ENCODE measurements at regions of chr15 and their contacts with region 1.

Region 1: GRCh38 chr15:68304589-68305337 is 27.2 kb downstream of the FEM1B start:
- DNase-seq: no peak
- H3K4me3 ChIP-seq: no peak overlapping the region
- H3K27ac ChIP-seq: peak overlapping the region in 1 of 2 experiments; percentile 61; a peak in 2 of 4 replicates
- H3K4me1 ChIP-seq: no peaks in the 10 kb centered on the region; a peak in 1 of 4 replicates
- H3K27me3 ChIP-seq: no peaks in the 10 kb centered on the region
- CTCF ChIP-seq: no peak
- EP300 ChIP-seq: no peak
- RAD21 ChIP-seq: no peak

Region 2: GRCh38 chr15:68097029-68097428 is 207.7 kb before region 1 on chr15:
- CTCF ChIA-PET with region 1: no interaction called
- POLR2A ChIA-PET with region 1: no interaction called
- DNase-seq: no peak
- H3K4me3 ChIP-seq: no peak overlapping the region
- H3K27ac ChIP-seq: no peak overlapping the region
- H3K4me1 ChIP-seq: no peaks in the 10 kb centered on the region
- H3K27me3 ChIP-seq: no peaks in the 10 kb centered on the region
- CTCF ChIP-seq: no peak
- EP300 ChIP-seq: no peak
- RAD21 ChIP-seq: no peak

Region 3: GRCh38 chr15:68277603-68278344 is 27.0 kb before region 1 on chr15 and contains the start of gene FEM1B:
- CTCF ChIA-PET with region 1: interaction called, 19 read pairs
- POLR2A ChIA-PET with region 1: interaction called, 16 read pairs
- DNase-seq: peak; percentile 93
- H3K4me3 ChIP-seq: peak within 1 kb of the TSS; percentile 86 to 98
- H3K27ac ChIP-seq: peak within 1 kb of the TSS; percentile 97 to 99
- H3K4me1 ChIP-seq: peaks cover 16 to 36% of the 10 kb centered on the region in 2 experiments; a peak in 3 of 4 replicates
- H3K27me3 ChIP-seq: no peaks in the 10 kb centered on the region
- CTCF ChIP-seq: peak; percentile 42; the same call in 1 of the 2 replicates
- EP300 ChIP-seq: peak in 1 of 2 experiments; percentile 26; a peak in 1 of 4 replicates
- RAD21 ChIP-seq: no peak
- polyA plus RNA-seq, gene FEM1B: 14.0 and 22.2 TPM in 2 replicates

Region 4: DNA sequence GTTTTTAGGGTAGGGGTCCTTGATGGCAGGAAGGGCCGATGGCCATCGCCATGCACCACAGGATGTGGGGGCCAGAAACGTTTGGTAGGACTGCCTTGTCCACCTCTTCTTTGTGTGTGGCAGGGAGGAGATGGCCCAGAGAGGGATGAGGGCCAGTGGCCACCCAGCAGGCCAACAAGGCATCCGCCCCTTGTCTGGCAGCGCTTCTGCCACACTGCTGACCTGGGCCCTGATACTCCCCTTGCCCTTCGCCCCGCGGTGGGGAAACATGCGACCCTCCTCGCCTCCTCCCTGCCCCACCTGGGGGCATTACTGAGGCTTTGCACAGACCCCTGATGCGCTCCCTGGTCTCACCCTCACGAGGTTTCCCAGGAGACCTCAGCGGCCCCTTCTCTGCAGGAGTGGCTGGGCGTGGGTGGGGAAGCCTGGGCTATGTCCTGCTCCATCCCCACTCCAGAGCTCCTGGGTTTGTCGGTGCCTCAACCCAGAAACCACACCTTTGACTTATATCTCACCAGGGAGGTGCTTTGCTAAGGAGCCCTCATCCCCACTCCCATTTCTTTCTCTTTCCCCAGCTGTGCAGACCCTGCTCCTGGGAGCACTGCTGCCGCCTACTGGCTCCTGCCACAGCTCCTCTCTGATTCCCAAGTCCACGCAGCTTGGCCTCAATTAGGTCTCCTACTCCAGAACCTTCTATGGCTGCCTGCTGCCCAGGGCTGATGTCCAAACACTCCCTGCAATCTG is 11.5 kb after region 1 on chr15:
- CTCF ChIA-PET with region 1: interaction called, 75 read pairs
- POLR2A ChIA-PET with region 1: no interaction called
- DNase-seq: no peak
- H3K4me3 ChIP-seq: no peak overlapping the region
- H3K27ac ChIP-seq: no peak overlapping the region
- H3K4me1 ChIP-seq: no peaks in the 10 kb centered on the region
- H3K27me3 ChIP-seq: no peaks in the 10 kb centered on the region
- CTCF ChIP-seq: peak; percentile 37; the same call in 1 of the 2 replicates
- EP300 ChIP-seq: no peak
- RAD21 ChIP-seq: no peak

Region 5: GRCh38 chr15:68341760-68342725 is 37.3 kb after region 1 on chr15:
- CTCF ChIA-PET with region 1: interaction called, 16 read pairs
- POLR2A ChIA-PET with region 1: no interaction called
- DNase-seq: no peak
- H3K4me3 ChIP-seq: no peak overlapping the region
- H3K27ac ChIP-seq: peak overlapping the region in 1 of 2 experiments; percentile 69; a peak in 1 of 4 replicates
- H3K4me1 ChIP-seq: peaks cover 2 to 8% of the 10 kb centered on the region in 2 experiments; a peak in 3 of 4 replicates
- H3K27me3 ChIP-seq: no peaks in the 10 kb centered on the region
- CTCF ChIP-seq: no peak
- EP300 ChIP-seq: no peak
- RAD21 ChIP-seq: no peak

Region 6: GRCh38 chr15:68383161-68384074 is 78.7 kb after region 1 on chr15:
- CTCF ChIA-PET with region 1: interaction called, 19 read pairs
- POLR2A ChIA-PET with region 1: no interaction called
- DNase-seq: peak; percentile 64
- H3K4me3 ChIP-seq: peak overlapping the region in 1 of 2 experiments; percentile 0; a peak in 1 of 4 replicates
- H3K27ac ChIP-seq: peak overlapping the region; percentile 76 to 88
- H3K4me1 ChIP-seq: peaks cover 12 to 15% of the 10 kb centered on the region in 2 experiments
- H3K27me3 ChIP-seq: no peaks in the 10 kb centered on the region
- CTCF ChIP-seq: peak; percentile 87
- EP300 ChIP-seq: no peak
- RAD21 ChIP-seq: peak; percentile 61

Region 7: DNA sequence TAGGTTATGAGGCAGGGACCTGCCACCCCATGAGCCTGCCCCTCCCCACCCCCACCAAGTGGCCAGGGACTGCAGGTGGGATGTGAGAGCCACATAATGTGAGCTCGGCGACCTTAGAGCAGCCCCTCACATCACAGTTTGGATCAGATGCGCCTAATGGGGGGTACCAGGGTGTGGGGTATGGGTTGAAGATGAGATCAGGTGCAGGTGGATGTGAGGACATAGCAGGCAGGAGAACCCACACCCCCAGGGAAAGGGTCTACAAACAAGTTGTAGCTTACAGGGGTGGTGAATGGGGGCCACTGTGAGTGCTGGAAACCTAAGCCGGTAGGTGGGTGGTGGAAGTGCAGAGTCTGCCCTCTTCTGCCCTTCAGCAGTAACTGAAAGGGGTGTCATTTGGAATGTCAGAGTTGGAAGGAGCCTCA is 368.0 kb after region 1 on chr15:
- CTCF ChIA-PET with region 1: interaction called, 22 read pairs
- POLR2A ChIA-PET with region 1: no interaction called
- DNase-seq: no peak
- H3K4me3 ChIP-seq: no peak overlapping the region
- H3K27ac ChIP-seq: no peak overlapping the region
- H3K4me1 ChIP-seq: no peaks in the 10 kb centered on the region; a peak in 1 of 4 replicates
- H3K27me3 ChIP-seq: no peaks in the 10 kb centered on the region
- CTCF ChIP-seq: peak; percentile 23; the same call in 1 of the 2 replicates
- EP300 ChIP-seq: no peak
- RAD21 ChIP-seq: peak; percentile 60

Measured in SK-N-SH (cell line).